ENCODE measurements at regions of chr19 and their contacts with region 1.

Region 1: DNA sequence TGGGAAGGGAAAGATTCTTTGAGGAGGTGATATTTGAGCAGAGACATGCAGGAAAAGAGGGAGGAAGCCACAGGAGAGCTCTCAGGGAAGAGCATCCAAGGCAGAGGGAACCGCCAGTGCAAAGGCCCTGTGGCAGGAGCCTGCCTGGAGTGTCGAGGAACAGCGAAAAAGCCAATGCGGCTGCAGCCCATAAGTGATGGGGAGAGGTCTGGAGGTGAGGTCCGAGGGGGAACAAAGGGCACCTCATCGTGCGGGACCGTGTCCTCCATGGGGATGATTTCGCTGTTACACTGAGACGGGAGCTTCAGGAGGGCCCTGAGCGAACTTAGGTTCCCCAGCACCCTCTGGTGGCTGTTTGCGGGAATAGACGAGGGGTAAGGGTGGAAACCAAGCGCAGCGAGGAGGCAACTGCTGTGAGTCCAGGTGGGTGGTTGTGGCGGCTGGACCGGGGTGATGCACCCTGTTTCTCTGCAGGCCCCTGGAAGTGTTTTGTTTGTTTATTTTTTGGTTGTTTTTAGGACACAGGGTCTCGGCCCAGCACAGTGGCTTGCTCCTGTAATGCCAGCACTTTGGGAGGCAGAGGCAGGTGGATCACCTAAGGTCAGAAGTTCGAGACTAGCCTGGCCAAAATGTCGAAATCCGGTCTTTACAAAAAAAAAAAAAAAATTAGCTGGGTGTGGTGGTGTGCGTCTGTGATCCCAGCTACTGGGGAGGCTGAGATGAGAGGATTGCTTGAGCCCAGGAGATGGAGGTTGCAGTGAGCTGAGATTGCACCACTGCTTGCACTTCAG is 5.9 kb upstream of the EHD2 start:
- DNase-seq: peak; percentile 91
- ATAC-seq: peak; percentile 99
- H3K4me3 Mint-ChIP-seq: no peak overlapping the region
- H3K27ac Mint-ChIP-seq: no peak overlapping the region
- H3K4me1 Mint-ChIP-seq: peaks cover 5% of the 10 kb centered on the region
- H3K27me3 Mint-ChIP-seq: peaks cover 8% of the 10 kb centered on the region

Region 2: DNA sequence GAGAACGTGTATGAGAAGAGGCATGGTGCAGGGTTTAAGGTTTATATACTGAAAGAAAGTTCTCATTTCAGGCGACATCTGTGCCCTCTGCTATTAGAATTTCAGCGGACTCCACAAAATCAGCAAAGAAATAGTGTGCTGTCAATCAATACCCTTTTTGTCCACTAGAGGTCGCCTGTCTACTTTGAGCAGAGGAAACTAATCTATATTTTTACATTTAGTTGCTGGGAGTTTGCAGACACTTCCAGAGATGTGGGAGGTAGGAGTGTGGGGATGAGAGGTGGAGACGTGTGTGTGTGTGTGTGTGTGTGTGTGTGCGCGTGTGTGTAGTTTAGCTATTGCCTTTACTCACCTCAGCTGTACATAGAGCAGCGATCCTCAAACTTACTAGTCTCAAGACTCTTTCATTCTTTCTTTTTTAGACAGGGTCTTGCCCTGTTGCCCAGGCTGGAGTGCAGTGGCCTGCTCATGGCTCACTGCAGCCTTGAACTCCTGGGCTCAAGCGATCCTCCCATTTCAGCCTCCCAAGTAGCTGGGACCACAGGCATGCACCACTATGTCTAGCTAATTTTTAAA is 422.9 kb before region 1 on chr19:
- CTCF ChIA-PET with region 1: interaction called, 3 read pairs
- POLR2A ChIA-PET with region 1: no interaction called
- intact Hi-C with region 1: loop called in 1 of 2 experiments (anchors 5 kb)
- DNase-seq: peak; percentile 45
- ATAC-seq: no peak
- H3K4me3 Mint-ChIP-seq: no peak overlapping the region
- H3K27ac Mint-ChIP-seq: no peak overlapping the region
- H3K4me1 Mint-ChIP-seq: peaks cover 5% of the 10 kb centered on the region
- H3K27me3 Mint-ChIP-seq: no peaks in the 10 kb centered on the region

Region 3: GRCh38 chr19:47296036-47296435 is 411.3 kb before region 1 on chr19:
- CTCF ChIA-PET with region 1: interaction called, 3 read pairs
- POLR2A ChIA-PET with region 1: no interaction called
- intact Hi-C with region 1: loop called (anchors 1 to 10 kb)
- DNase-seq: peak; percentile 87
- ATAC-seq: peak; percentile 98
- H3K4me3 Mint-ChIP-seq: no peak overlapping the region
- H3K27ac Mint-ChIP-seq: no peak overlapping the region
- H3K4me1 Mint-ChIP-seq: peaks cover 2% of the 10 kb centered on the region
- H3K27me3 Mint-ChIP-seq: no peaks in the 10 kb centered on the region

Region 4: DNA sequence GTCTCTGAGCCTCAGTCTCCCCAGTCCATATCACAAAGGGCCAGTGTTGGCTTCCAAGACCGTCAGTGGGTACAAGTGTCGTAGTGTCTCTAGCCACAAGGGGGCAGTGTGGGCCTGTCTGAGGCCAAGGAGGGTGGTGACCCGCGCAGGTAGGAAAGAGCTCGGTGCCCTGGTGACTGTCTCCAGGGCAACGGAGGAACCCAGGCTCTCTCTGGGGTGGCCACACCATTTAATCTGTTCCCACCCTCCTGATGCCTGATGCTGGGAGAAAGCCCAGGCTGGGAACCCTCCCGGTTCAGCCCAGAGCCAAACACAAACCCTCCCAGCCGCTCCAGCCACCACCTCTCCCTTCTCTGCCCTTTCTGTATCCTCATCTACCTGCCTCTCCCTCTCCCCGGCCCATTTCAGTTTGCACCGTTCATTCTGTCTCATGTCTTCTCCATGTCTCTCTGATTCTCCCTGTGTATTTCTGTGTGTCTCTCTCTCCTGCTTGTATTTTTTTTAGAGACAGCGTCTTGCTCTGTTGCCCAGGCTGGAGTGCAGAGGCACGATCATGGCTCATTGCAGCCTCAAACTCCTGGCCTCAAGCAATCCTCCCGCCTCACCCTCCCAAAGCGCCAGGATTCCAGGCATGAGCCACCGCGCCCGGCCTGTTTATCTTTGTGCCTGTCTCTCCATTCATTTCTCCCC is 270.5 kb before region 1 on chr19:
- CTCF ChIA-PET with region 1: interaction called, 52 read pairs
- POLR2A ChIA-PET with region 1: interaction called, 3 read pairs
- intact Hi-C with region 1: loop called (anchors 1 kb)
- DNase-seq: peak; percentile 92
- ATAC-seq: peak; percentile 91
- H3K4me3 Mint-ChIP-seq: no peak overlapping the region
- H3K27ac Mint-ChIP-seq: no peak overlapping the region
- H3K4me1 Mint-ChIP-seq: peaks cover 17% of the 10 kb centered on the region
- H3K27me3 Mint-ChIP-seq: peaks cover 38% of the 10 kb centered on the region

Region 5: DNA sequence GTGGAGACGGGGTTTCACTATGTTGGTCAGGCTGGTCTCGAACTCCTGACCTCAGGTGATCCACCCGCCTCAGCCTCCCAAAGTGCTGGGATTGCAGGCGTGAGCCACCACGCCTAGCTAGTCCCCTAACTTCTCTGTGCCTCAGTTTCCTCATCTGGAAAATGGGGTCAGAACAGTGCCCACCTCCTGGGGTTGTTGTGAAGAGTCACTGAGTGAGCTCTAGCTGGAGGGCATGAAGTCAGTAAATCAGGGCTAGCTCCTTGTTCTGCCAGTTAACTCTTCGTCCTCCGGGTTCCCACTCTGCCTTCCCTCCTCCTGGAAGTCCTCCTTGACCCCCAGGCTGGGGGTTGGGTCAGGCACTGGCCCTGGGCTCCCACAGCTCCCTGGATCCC is 15.4 kb after region 1 on chr19:
- CTCF ChIA-PET with region 1: interaction called, 10 read pairs
- POLR2A ChIA-PET with region 1: no interaction called
- intact Hi-C with region 1: no loop called
- DNase-seq: no peak
- ATAC-seq: no peak
- H3K4me3 Mint-ChIP-seq: no peak overlapping the region
- H3K27ac Mint-ChIP-seq: no peak overlapping the region
- H3K4me1 Mint-ChIP-seq: peaks cover 3% of the 10 kb centered on the region
- H3K27me3 Mint-ChIP-seq: peaks cover 12% of the 10 kb centered on the region

Measured in activated CD4-positive, alpha-beta T cell treated with anti-CD3 and anti-CD28 coated beads for 36 hours (primary cell).